Activated naive CD4-positive, alpha-beta T cell treated with anti-CD3 and anti-CD28 coated beads for 36 hours (primary cell): ENCODE measurements at regions of chr1 and their contacts with region 1.

Region 1: DNA sequence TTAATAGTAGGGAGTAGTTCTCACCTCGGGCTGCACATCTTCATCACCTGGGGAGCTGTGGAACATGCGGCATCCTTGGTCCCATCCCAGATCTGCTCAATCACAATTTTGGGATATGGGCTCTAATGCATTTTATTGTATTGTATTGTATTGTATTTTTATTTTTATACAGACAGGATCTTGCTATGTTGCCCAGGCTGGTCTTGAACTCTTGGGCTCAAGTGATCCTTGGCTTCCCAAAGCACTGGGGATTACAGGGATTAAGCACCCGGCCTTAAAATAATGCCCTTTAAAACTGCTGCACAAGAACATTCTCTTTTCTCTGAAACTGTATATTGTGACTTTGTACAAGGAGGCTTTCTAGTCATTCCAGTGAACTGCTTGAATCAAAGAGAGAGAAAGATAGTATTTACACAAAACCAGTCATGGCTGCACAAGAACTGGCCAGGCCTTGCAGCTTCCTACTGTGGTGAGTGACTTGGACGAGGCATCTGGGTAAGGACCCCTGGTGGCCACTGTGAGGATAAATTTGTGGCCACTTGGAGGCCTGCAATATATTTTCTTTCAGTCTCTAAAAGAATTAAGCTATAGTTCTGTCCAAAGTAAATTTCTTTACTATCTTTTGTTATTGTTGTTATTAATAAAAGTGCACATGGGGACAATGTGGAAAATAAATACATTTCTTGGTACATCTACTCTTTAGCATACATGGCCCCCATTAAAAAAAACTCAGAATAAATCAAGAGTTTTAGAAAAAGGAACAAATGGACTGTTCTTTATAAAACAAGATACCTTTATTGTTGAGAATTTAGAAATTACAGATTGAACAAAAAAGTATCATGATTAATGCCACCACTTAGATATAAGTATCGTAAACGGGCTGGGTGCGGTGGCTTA is 48.0 kb downstream of the TBCE start:
- DNase-seq: peak; percentile 76
- H3K4me3 Mint-ChIP-seq: no peak overlapping the region
- H3K27ac Mint-ChIP-seq: no peak overlapping the region
- H3K4me1 Mint-ChIP-seq: peaks cover 4% of the 10 kb centered on the region
- H3K27me3 Mint-ChIP-seq: no peaks in the 10 kb centered on the region

Region 2: GRCh38 chr1:234486498-234487448 is 928.5 kb before region 1 on chr1:
- CTCF ChIA-PET with region 1: no interaction called
- intact Hi-C with region 1: loop called (anchors 2 kb)
- DNase-seq: peak; percentile 66
- H3K4me3 Mint-ChIP-seq: no peak overlapping the region
- H3K27ac Mint-ChIP-seq: peak overlapping the region; percentile 91
- H3K4me1 Mint-ChIP-seq: peaks cover 41% of the 10 kb centered on the region
- H3K27me3 Mint-ChIP-seq: peaks cover 12% of the 10 kb centered on the region

Region 3: DNA sequence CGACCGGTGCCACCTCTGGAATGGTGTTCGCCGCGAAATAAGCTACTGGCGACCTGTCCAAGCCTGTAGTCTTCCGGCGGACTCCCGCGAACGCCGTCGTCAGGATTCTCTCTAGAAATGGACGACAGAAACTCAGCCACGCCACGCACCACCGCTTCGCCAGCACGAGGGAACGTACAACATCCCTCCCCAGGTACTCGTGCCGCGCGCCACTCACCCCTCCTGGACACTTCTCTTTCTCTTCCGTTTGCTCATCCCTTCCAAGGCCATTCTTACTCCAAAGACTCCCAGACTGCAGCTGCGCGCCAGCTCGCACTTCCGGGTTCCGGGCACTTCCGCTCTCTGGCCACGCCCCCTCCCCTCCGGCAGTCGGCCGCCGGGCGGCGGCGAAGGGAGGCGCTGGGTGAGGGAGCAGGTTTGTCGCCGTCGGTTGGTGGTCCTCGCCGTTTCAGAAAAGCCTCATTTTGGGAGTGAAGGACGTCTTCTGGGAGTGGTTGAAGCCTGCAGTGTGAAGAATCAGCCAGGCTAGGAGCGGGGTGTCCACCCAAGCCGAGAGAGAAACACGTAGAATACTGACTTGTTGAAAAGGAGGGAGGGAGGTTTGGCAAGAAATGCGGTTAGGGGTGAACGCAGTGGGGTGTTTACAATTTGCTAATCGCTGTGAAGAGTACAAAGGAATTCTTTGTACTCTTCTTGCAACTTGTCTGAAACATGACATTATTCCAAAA is 254.1 kb before region 1 on chr1 and contains the start of gene RBM34:
- CTCF ChIA-PET with region 1: interaction called, 7 read pairs
- intact Hi-C with region 1: loop called (anchors 1 kb)
- DNase-seq: peak; percentile 94
- H3K4me3 Mint-ChIP-seq: peak within 1 kb of the TSS; percentile 100
- H3K27ac Mint-ChIP-seq: peak within 1 kb of the TSS; percentile 99
- H3K4me1 Mint-ChIP-seq: peaks cover 26% of the 10 kb centered on the region
- H3K27me3 Mint-ChIP-seq: no peaks in the 10 kb centered on the region
- total RNA-seq, gene RBM34: 104 TPM

Region 4: GRCh38 chr1:235246022-235246991 is 168.9 kb before region 1 on chr1:
- CTCF ChIA-PET with region 1: interaction called, 44 read pairs
- intact Hi-C with region 1: no loop called
- DNase-seq: no peak
- H3K4me3 Mint-ChIP-seq: no peak overlapping the region
- H3K27ac Mint-ChIP-seq: no peak overlapping the region
- H3K4me1 Mint-ChIP-seq: peaks cover 41% of the 10 kb centered on the region
- H3K27me3 Mint-ChIP-seq: no peaks in the 10 kb centered on the region

Region 5: GRCh38 chr1:235336903-235337302 is 78.4 kb before region 1 on chr1:
- CTCF ChIA-PET with region 1: interaction called, 17 read pairs
- intact Hi-C with region 1: no loop called
- DNase-seq: peak; percentile 23
- H3K4me3 Mint-ChIP-seq: peak overlapping the region; percentile 37
- H3K27ac Mint-ChIP-seq: peak overlapping the region; percentile 74
- H3K4me1 Mint-ChIP-seq: peaks cover 38% of the 10 kb centered on the region
- H3K27me3 Mint-ChIP-seq: no peaks in the 10 kb centered on the region

Region 6: GRCh38 chr1:235404195-235404594 is 11.1 kb before region 1 on chr1:
- CTCF ChIA-PET with region 1: interaction called, 16 read pairs
- intact Hi-C with region 1: no loop called
- DNase-seq: no peak
- H3K4me3 Mint-ChIP-seq: no peak overlapping the region
- H3K27ac Mint-ChIP-seq: no peak overlapping the region
- H3K4me1 Mint-ChIP-seq: peaks cover 3% of the 10 kb centered on the region
- H3K27me3 Mint-ChIP-seq: no peaks in the 10 kb centered on the region

Region 7: DNA sequence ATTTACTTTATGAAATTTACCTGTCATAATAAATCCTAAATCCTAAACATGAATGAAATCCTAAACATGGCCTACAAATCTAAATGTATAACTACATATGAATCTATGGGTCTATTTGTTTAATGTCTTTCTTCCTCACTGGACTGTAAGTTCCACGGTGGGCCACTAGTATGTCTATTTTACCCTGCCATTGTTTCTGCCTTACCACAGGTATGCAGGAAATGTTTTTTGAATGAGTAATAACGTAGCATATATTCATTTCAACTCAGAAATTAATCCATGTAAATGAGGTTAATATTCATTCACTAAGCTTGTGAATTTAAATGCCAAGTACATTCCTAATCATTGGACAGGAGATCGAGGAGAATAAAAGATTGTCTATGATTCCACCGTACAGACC is 53.7 kb after region 1 on chr1:
- CTCF ChIA-PET with region 1: no interaction called
- intact Hi-C with region 1: no loop called
- DNase-seq: no peak
- H3K4me3 Mint-ChIP-seq: no peak overlapping the region
- H3K27ac Mint-ChIP-seq: no peak overlapping the region
- H3K4me1 Mint-ChIP-seq: peaks cover 4% of the 10 kb centered on the region
- H3K27me3 Mint-ChIP-seq: no peaks in the 10 kb centered on the region

Region 8: DNA sequence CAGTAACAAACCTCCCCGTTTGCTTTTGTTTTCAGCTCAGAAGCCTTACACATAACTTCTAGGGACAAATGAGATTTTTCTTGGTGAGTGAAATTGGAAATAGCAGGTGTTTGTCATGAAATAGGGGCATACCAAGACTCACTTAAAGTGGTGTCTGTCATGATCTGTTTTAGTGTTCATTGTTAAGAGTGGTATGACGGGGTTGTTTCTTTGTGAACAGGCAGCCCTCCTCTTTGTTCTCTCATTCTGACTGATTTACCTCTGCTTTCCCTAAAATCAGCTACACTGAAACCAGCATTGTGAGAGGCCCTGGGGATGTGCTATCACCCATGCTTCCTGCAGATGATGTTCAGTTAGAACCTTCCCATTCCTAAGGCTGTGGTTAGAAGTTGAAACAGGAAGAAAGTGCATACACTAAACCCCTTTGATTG is 869.0 kb after region 1 on chr1:
- CTCF ChIA-PET with region 1: no interaction called
- intact Hi-C with region 1: no loop called
- DNase-seq: peak; percentile 77
- H3K4me3 Mint-ChIP-seq: no peak overlapping the region
- H3K27ac Mint-ChIP-seq: peak overlapping the region; percentile 73
- H3K4me1 Mint-ChIP-seq: peaks cover 38% of the 10 kb centered on the region
- H3K27me3 Mint-ChIP-seq: no peaks in the 10 kb centered on the region